Activated CD4-positive, alpha-beta T cell treated with anti-CD3 and anti-CD28 coated beads for 36 hours (primary cell): ENCODE measurements at regions of chr17 and their contacts with region 1.

Region 1: DNA sequence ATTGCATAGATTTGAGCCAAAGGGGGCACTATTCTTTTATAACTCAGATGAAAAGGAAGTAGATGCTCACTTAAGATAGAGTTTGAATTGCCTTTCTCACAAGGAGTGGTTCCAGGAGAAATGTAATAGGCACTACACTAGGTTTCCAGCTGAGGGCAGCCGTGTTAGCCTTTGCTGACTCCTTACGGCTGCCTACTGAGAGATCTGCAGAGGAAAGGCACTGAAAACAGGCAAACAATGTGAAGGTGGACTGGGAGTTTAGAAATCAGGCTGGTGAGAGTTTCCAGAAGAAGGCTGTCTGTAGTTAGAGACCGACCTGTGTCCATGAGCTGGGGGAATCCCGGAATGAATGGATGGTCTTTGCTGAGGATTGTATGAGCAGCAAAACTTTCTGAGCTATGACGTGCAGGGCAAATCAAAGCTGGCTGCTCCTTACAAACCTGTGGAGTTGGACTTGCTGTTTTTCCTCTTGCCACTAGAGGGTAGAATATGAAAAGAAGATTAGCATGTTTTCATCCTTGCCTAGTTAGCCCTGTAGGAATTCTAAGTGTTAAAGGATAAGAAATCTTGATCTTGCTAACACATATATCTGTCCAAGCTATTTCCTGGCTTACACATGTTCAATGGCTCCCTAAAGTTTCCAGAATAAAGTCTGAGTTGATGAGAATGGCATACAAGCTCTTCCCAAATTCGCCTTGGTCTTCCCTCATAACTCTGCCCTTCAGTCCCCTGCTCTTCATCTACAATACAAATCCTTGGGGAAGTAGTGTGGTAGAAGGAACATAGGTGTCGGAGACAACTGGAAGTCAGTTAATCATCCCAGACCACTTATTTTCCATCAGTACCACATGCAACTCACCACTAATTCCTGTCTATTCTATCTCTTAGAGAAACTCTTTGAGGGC is 20.1 kb upstream of the TAOK1 start:
- DNase-seq: peak; percentile 66
- ATAC-seq: peak; percentile 93
- H3K4me3 Mint-ChIP-seq: no peak overlapping the region
- H3K27ac Mint-ChIP-seq: no peak overlapping the region
- H3K4me1 Mint-ChIP-seq: no peaks in the 10 kb centered on the region
- H3K27me3 Mint-ChIP-seq: no peaks in the 10 kb centered on the region

Region 2: DNA sequence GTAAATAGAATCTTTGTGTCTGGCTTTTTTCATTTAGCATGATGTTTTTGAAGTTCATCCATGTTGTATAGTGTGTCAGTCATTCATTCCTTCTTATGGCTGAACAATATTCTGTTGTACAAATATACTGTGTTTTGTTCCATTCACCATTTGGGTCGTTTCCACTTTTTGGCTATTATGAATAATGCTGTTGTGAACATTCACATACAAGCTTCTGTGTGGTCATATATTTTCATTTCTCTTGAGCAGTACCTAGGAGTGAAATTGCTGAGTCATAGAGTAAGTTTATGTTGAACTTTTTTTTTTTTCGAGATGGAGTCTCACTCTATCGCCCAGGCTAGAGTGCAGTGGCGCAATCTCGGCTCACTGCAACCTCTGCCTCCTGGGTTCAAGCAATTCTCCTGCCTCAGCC is 12.3 kb before region 1 on chr17:
- CTCF ChIA-PET with region 1: interaction called, 10 read pairs
- POLR2A ChIA-PET with region 1: no interaction called
- intact Hi-C with region 1: no loop called
- DNase-seq: no peak
- ATAC-seq: peak; percentile 84
- H3K4me3 Mint-ChIP-seq: no peak overlapping the region
- H3K27ac Mint-ChIP-seq: no peak overlapping the region
- H3K4me1 Mint-ChIP-seq: no peaks in the 10 kb centered on the region
- H3K27me3 Mint-ChIP-seq: no peaks in the 10 kb centered on the region

Region 3: DNA sequence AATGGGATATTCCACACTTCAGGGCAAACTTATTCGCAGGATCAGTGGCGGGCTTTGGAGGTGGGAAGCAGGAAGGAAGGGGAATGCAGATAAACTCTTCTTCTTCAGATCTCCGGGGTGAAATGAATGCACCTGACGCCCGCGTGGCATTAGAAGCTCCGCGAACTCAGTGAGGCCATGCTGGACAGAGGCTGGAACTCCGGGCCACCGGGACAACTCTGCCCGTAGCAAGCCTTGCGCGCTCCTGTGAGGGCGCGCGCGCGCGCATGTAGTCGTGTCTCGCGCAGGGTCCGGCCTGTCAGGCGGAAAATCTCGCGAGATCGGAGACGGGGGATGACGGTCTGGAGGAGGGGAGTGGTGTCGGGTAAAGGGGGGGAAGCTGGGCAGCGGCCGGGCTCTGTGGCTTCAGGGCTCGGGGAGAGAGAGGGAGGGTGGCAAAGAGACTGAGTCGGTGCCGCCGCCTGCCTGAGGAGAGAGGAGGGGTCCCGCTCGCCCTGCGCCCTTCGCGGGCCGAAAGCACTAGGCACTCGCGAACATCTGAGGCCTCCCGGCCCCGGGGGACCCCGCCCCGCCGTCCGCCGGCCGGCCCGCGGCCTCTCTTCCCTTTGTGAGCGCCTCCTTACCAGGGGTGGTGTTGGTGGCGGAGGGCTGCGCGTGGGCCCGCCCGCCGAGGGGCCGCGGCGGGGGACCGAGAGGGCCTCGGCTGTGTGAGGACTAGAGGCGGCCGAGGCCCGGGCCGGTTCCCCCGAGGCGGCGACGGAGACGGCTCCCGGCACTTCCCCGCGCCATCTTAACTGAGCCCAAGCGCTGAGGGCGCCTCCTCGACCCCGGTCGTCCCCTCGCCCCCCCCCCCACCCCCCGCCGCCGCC is 20.1 kb after region 1 on chr17 and contains the start of gene TAOK1:
- CTCF ChIA-PET with region 1: interaction called, 61 read pairs
- POLR2A ChIA-PET with region 1: no interaction called
- intact Hi-C with region 1: no loop called
- DNase-seq: peak; percentile 99
- ATAC-seq: peak; percentile 95
- H3K4me3 Mint-ChIP-seq: peak within 1 kb of the TSS; percentile 81
- H3K27ac Mint-ChIP-seq: peak within 1 kb of the TSS; percentile 94
- H3K4me1 Mint-ChIP-seq: peaks cover 36% of the 10 kb centered on the region
- H3K27me3 Mint-ChIP-seq: no peaks in the 10 kb centered on the region
- total RNA-seq, gene TAOK1: 29.9 to 35.1 TPM

Region 4: GRCh38 chr17:29483503-29483902 is 113.4 kb after region 1 on chr17:
- CTCF ChIA-PET with region 1: interaction called, 10 read pairs
- POLR2A ChIA-PET with region 1: no interaction called
- intact Hi-C with region 1: no loop called
- DNase-seq: no peak
- ATAC-seq: no peak
- H3K4me3 Mint-ChIP-seq: no peak overlapping the region
- H3K27ac Mint-ChIP-seq: no peak overlapping the region
- H3K4me1 Mint-ChIP-seq: no peaks in the 10 kb centered on the region
- H3K27me3 Mint-ChIP-seq: no peaks in the 10 kb centered on the region

Region 5: DNA sequence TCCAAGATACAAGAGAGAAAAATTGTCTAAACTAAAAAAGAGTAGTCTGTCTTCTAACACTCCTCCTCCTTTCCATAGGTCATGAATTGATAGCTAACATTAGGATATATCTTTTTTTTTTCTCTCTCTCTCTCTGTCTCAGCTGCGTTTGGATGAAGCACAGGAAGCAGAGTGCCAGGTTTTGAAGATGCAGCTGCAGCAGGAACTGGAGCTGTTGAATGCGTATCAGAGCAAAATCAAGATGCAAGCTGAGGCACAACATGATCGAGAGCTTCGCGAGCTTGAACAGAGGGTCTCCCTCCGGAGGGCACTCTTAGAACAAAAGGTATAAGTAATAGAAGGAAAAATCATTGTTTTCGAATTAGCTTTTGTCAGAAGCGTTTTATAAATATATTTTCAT is 163.9 kb after region 1 on chr17:
- CTCF ChIA-PET with region 1: interaction called, 67 read pairs
- POLR2A ChIA-PET with region 1: no interaction called
- intact Hi-C with region 1: loop called (anchors 1 kb)
- DNase-seq: no peak
- ATAC-seq: no peak
- H3K4me3 Mint-ChIP-seq: no peak overlapping the region
- H3K27ac Mint-ChIP-seq: no peak overlapping the region
- H3K4me1 Mint-ChIP-seq: no peaks in the 10 kb centered on the region
- H3K27me3 Mint-ChIP-seq: no peaks in the 10 kb centered on the region

Region 6: GRCh38 chr17:29589524-29590410 is 219.7 kb after region 1 on chr17 and contains the start of gene GIT1:
- CTCF ChIA-PET with region 1: interaction called, 6 read pairs
- POLR2A ChIA-PET with region 1: no interaction called
- intact Hi-C with region 1: loop called in 1 of 2 experiments (anchors 1 kb)
- DNase-seq: peak; percentile 92
- ATAC-seq: peak; percentile 69
- H3K4me3 Mint-ChIP-seq: peak within 1 kb of the TSS; percentile 94
- H3K27ac Mint-ChIP-seq: peak within 1 kb of the TSS; percentile 92
- H3K4me1 Mint-ChIP-seq: peaks cover 64% of the 10 kb centered on the region
- H3K27me3 Mint-ChIP-seq: no peaks in the 10 kb centered on the region
- total RNA-seq, gene GIT1: 60.5 to 74.1 TPM

Region 7: DNA sequence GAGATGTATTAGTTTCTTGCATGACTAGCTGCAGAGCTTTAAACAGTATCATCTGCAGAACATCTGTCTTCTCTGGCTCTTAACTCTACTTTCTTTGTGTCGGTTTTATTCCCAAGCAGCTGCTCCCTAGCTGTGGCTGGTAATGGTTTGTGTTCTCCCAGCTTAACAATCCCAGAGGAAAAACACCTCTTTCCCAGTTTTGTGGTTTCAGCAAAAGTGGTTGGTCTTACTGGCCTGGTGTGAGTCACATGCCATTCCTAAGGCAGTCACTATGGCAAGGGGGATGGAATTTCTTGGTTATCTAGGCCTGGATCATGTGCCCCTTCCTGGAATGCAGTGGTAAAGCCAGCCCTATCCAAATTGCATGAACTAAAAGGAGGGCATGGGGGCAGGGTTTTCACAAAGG is 1899.5 kb after region 1 on chr17:
- CTCF ChIA-PET with region 1: no interaction called
- POLR2A ChIA-PET with region 1: no interaction called
- intact Hi-C with region 1: no loop called
- DNase-seq: no peak
- ATAC-seq: no peak
- H3K4me3 Mint-ChIP-seq: no peak overlapping the region
- H3K27ac Mint-ChIP-seq: no peak overlapping the region
- H3K4me1 Mint-ChIP-seq: no peaks in the 10 kb centered on the region
- H3K27me3 Mint-ChIP-seq: no peaks in the 10 kb centered on the region